Gastrocnemius medialis (tissue), 4 donors: ENCODE measurements at regions of chr4 and their contacts with region 1.

Region 1: GRCh38 chr4:3452376-3452775 is 10.6 kb downstream of the HGFAC start:
- DNase-seq: no peak
- ATAC-seq: peak in 1 of 2 donors; percentile 83
- H3K4me3 ChIP-seq: no peak overlapping the region
- H3K27ac ChIP-seq: peak overlapping the region in 1 of 4 donors; percentile 69
- H3K4me1 ChIP-seq: peaks cover 0 to 4% of the 10 kb centered on the region in 2 donors
- H3K27me3 ChIP-seq: no peaks in the 10 kb centered on the region
- CTCF ChIP-seq: peak in 2 of 5 experiments; percentile 6 to 30
- POLR2A ChIP-seq: no peak

Region 2: GRCh38 chr4:3009422-3009821 is 443.0 kb before region 1 on chr4:
- in situ Hi-C with region 1: no loop called
- intact Hi-C with region 1: no loop called
- DNase-seq: no peak
- ATAC-seq: no peak
- H3K4me3 ChIP-seq: no peak overlapping the region
- H3K27ac ChIP-seq: no peak overlapping the region
- H3K4me1 ChIP-seq: no peaks in the 10 kb centered on the region
- H3K27me3 ChIP-seq: no peaks in the 10 kb centered on the region
- CTCF ChIP-seq: no peak
- POLR2A ChIP-seq: no peak

Region 3: GRCh38 chr4:3355266-3355748 is 97.1 kb before region 1 on chr4:
- in situ Hi-C with region 1: loop called in 1 of 4 experiments (anchors 10 kb)
- intact Hi-C with region 1: no loop called
- DNase-seq: no peak
- ATAC-seq: no peak
- H3K4me3 ChIP-seq: no peak overlapping the region
- H3K27ac ChIP-seq: no peak overlapping the region
- H3K4me1 ChIP-seq: peaks cover 0 to 4% of the 10 kb centered on the region in 2 donors
- H3K27me3 ChIP-seq: no peaks in the 10 kb centered on the region
- CTCF ChIP-seq: no peak
- POLR2A ChIP-seq: no peak